HEK293 (cell line): ENCODE measurements at regions of chr9 and their contacts with region 1.

Region 1: GRCh38 chr9:69237702-69238295 is 63.7 kb downstream of the TJP2 start:
- H3K4me3 ChIP-seq: no peak overlapping the region
- H3K27ac ChIP-seq: no peak overlapping the region
- H3K4me1 ChIP-seq: no peaks in the 10 kb centered on the region
- CTCF ChIP-seq: no peak

Region 2: GRCh38 chr9:69223605-69224004 is 14.2 kb before region 1 on chr9:
- CTCF ChIA-PET with region 1: interaction called, 20 read pairs
- POLR2A ChIA-PET with region 1: no interaction called
- H3K4me3 ChIP-seq: no peak overlapping the region
- H3K27ac ChIP-seq: no peak overlapping the region
- H3K4me1 ChIP-seq: no peaks in the 10 kb centered on the region
- CTCF ChIP-seq: no peak